Naive thymus-derived CD8-positive, alpha-beta T cell (primary cell): ENCODE measurements at regions of chr22 and their contacts with region 1.

Region 1: GRCh38 chr22:46071451-46072109 is 78.7 kb upstream of the PPARA start:
- DNase-seq: peak in 8 of 10 donors; percentile 33 to 80 (median 43)
- ATAC-seq: peak; percentile 33 to 34
- H3K4me3 Mint-ChIP-seq: peak overlapping the region; percentile 73 to 89 (median 82)
- H3K27ac Mint-ChIP-seq: peak overlapping the region in 3 of 10 donors; percentile 74 to 84 (median 77)
- H3K4me1 Mint-ChIP-seq: peaks cover 21 to 67% (median 56%) of the 10 kb centered on the region in 4 donors
- H3K27me3 Mint-ChIP-seq: no peaks in the 10 kb centered on the region

Region 2: GRCh38 chr22:45984316-45984916 is 87.2 kb before region 1 on chr22:
- POLR2A ChIA-PET with region 1: no interaction called
- DNase-seq: peak in 1 of 10 donors; percentile 37
- ATAC-seq: peak; percentile 42 to 76
- H3K4me3 Mint-ChIP-seq: no peak overlapping the region
- H3K27ac Mint-ChIP-seq: peak overlapping the region in 2 of 10 donors; percentile 17 to 53
- H3K4me1 Mint-ChIP-seq: peaks cover 0 to 5% (median 2%) of the 10 kb centered on the region in 4 donors
- H3K27me3 Mint-ChIP-seq: peaks cover 0 to 9% (median 0%) of the 10 kb centered on the region in 5 donors

Region 3: GRCh38 chr22:46044621-46045438 is 26.8 kb before region 1 on chr22:
- POLR2A ChIA-PET with region 1: interaction called, 10 read pairs
- DNase-seq: peak in 7 of 10 donors; percentile 18 to 55 (median 38)
- ATAC-seq: peak; percentile 73 to 84
- H3K4me3 Mint-ChIP-seq: peak overlapping the region; percentile 81 to 92 (median 86)
- H3K27ac Mint-ChIP-seq: peak overlapping the region; percentile 78 to 96 (median 92)
- H3K4me1 Mint-ChIP-seq: peaks cover 6 to 50% (median 25%) of the 10 kb centered on the region in 4 donors
- H3K27me3 Mint-ChIP-seq: no peaks in the 10 kb centered on the region

Region 4: DNA sequence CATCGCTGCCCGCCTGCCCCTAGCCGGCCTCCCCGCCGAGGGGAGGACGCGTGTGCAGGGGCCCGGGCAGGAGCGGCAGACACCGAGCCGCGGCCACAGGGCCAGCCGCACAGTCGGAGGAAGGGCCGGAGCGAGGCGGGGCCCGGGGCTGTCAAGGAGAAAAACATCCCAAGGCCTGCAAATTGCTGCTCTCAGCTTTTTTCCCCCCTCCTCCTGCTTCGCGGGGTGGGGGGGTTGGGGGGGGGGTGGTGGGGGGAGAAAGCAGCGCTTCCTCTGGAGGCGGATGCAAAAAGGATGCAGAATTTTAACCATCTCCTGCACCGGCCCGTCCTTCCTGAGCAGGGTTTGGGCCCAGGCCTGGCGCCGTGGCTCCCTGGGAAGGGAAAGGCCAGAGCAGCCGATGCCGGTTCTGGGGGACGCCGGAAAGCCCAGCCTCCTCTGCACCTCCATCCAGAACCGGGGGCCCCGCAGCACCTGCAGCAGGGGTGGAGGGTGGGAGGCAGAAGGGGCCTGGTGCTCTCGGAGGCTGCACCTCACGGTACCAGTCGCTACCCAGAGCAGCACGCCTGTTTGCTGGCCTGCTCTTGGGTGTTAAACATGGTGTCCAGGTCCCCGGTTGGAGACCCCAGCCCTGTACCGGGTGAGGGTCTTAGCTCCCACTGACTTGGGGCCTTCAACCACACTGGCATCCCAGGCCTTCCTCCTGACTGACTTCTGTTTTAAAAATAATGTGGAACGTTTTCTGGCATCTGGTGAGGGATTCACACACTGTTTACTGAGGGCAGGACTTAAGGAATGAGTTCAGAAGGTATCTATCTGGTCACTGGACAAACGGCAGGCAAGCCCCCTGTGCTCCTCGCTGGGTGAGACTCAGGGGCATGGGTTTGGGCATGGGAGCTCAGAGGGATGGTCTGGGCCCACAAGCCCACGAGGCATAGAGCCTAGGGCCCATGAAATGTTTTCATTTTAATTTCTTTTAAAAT is 17.2 kb before region 1 on chr22:
- POLR2A ChIA-PET with region 1: interaction called, 30 read pairs
- DNase-seq: peak in 8 of 10 donors; percentile 11 to 75 (median 46)
- ATAC-seq: peak; percentile 46 to 54
- H3K4me3 Mint-ChIP-seq: peak overlapping the region; percentile 78 to 94 (median 90)
- H3K27ac Mint-ChIP-seq: peak overlapping the region; percentile 91 to 99 (median 96)
- H3K4me1 Mint-ChIP-seq: peaks cover 17 to 81% (median 55%) of the 10 kb centered on the region in 4 donors
- H3K27me3 Mint-ChIP-seq: no peaks in the 10 kb centered on the region

Region 5: DNA sequence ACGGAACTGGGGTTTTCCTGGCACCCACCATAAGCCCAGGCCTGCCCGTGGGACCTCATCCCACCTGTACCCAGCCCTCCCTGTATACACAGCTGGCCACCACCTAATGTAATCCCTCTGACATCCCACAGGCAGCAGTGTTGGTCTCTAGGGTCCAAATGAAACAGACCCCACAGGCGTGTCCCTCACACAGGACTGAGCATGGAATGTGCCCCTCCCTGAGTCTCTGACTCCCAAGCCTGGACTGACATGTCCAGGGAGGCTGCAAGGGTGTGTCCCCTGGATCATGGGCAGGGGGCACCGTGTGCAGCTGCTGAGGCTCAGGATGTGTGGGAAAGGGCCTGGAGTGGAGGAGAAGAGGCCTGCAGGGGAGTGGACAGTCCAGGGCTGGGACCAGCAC is 28.2 kb after region 1 on chr22:
- POLR2A ChIA-PET with region 1: no interaction called
- DNase-seq: no peak
- ATAC-seq: no peak
- H3K4me3 Mint-ChIP-seq: no peak overlapping the region
- H3K27ac Mint-ChIP-seq: no peak overlapping the region
- H3K4me1 Mint-ChIP-seq: no peaks in the 10 kb centered on the region
- H3K27me3 Mint-ChIP-seq: no peaks in the 10 kb centered on the region